ENCODE measurements at regions of chr12 and their contacts with region 1.

Region 1: GRCh38 chr12:1795785-1796514 is 24.4 kb upstream of the LRTM2 start:
- DNase-seq: peak; percentile 93
- H3K4me3 Mint-ChIP-seq: peak overlapping the region; percentile 87
- H3K27ac Mint-ChIP-seq: peak overlapping the region; percentile 89
- H3K4me1 Mint-ChIP-seq: peaks cover 18% of the 10 kb centered on the region
- H3K27me3 Mint-ChIP-seq: no peaks in the 10 kb centered on the region

Region 2: DNA sequence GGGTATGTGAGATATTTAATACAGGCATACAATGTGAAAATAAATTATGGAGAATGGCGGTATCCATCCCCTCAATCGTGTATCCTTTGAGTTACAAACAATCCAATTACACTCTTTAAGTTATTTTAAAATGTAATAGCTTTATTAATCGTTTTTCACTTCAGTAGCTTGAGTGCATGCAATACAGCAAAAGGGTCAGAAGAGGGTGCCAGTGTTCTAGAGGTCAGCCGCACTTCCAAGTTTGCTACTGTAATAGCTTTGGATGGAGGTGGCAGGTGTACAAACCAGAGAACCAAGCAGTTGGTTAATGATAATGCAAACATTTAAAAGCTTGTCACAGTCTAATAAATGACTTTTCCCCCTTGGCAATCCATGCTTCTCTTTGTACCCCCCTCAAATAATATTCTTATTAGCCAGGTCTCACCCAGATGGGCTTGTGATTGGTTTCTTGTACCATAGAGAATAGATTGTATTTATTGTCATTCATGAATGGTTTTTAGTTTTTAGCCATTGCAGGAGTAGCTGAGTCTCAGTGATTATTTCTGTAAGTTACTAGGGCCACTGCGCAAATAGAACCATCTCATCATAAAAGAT is 677.9 kb before region 1 on chr12:
- intact Hi-C with region 1: loop called (anchors 1 kb)
- DNase-seq: peak; percentile 52
- H3K4me3 Mint-ChIP-seq: no peak overlapping the region
- H3K27ac Mint-ChIP-seq: no peak overlapping the region
- H3K4me1 Mint-ChIP-seq: peaks cover 6% of the 10 kb centered on the region
- H3K27me3 Mint-ChIP-seq: no peaks in the 10 kb centered on the region

Region 3: DNA sequence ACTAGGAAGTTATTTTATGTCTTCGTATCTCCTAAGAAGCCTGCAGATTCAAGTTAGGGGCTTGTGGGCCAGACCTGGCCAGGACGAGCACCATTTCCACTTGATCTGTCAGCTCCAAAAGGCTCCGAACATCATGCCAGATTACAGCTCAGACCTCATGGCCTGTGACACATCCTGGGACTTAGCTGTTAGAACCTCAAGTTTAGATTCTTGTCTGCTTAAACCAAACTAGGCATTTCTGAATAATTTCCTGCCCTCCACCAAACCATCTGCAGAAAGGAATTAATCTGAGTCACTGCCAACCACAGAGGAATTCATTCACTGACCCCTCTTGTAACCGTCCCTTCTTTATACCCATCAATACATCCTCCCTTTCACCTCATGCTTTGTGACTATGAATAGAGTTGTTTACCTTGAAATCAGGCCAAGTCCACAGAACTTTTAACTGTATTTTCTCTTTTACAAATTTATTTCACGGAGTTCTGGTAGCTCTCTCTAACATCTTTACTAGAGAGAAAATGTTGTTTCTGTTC is 321.8 kb before region 1 on chr12:
- intact Hi-C with region 1: no loop called
- DNase-seq: peak; percentile 16
- H3K4me3 Mint-ChIP-seq: no peak overlapping the region
- H3K27ac Mint-ChIP-seq: no peak overlapping the region
- H3K4me1 Mint-ChIP-seq: peaks cover 6% of the 10 kb centered on the region
- H3K27me3 Mint-ChIP-seq: no peaks in the 10 kb centered on the region

Region 4: DNA sequence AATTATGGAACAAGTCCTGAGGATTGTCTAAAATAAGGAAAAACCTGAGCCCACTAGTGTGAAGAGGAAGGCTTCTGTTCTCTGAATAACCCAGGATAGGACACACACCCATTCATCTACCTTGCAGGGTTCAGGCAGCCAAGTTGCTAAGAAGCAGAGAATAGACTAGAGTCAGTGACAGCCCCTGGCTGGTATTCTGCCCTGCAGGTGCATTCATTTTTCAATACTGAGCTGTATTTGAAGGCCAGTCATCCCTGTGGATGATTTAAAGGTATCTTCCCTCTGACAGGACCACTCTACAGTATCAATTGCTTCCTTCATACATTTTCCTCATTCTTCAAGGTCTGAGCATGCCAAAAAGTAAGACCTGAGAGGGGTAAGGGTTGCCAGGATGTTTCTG is 144.0 kb before region 1 on chr12:
- intact Hi-C with region 1: loop called (anchors 1 kb)
- DNase-seq: no peak
- H3K4me3 Mint-ChIP-seq: no peak overlapping the region
- H3K27ac Mint-ChIP-seq: no peak overlapping the region
- H3K4me1 Mint-ChIP-seq: no peaks in the 10 kb centered on the region
- H3K27me3 Mint-ChIP-seq: peaks cover 29% of the 10 kb centered on the region

Region 5: GRCh38 chr12:1662761-1663439 is 133.1 kb before region 1 on chr12:
- intact Hi-C with region 1: no loop called
- DNase-seq: no peak
- H3K4me3 Mint-ChIP-seq: peak overlapping the region; percentile 85
- H3K27ac Mint-ChIP-seq: peak overlapping the region; percentile 78
- H3K4me1 Mint-ChIP-seq: peaks cover 31% of the 10 kb centered on the region
- H3K27me3 Mint-ChIP-seq: peaks cover 2% of the 10 kb centered on the region

Region 6: DNA sequence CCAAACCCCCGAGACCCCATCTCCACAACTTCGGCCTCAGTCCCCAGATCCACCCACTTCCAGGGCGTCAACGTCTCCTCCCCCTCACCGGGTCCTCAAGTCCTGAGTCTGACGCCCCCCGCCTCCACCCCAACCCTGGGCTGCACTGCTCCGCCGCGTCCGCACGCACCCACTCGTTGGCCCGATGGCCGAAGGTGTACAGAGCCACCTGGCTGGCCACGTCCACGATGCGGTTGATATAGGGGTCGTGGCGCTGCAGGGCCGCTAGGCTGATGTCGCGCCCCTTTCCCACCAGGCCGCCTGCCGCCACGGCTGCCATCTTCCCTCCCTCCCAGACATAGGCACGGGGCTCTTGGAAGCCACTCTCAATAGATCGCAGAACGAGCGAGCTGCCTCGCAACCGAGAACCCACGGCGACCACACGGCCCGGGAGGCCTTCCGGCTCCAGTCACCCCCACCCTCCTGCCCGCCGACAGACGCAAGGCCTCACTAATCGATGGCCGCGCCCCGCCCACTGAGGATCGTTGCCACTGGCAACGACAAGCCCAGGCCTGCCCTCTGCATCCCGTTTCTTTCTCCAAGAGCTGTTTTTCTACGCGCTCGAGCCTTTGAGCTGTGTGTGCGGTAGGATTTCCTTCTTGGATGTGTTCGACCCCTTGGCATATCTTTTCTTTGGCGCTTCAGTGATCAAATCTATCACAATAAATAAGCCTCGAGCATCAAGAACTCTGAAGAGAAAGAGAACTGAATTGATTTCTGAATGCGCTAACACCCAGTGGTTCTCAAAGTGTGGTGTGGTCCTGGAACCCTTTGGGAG is 208.4 kb after region 1 on chr12 and contains the start of gene DCP1B:
- intact Hi-C with region 1: loop called (anchors 2 kb)
- DNase-seq: peak; percentile 93
- H3K4me3 Mint-ChIP-seq: peak within 1 kb of the TSS; percentile 97
- H3K27ac Mint-ChIP-seq: peak within 1 kb of the TSS; percentile 95
- H3K4me1 Mint-ChIP-seq: peaks cover 31% of the 10 kb centered on the region
- H3K27me3 Mint-ChIP-seq: peaks cover 3% of the 10 kb centered on the region
- total RNA-seq, gene DCP1B: 8.8 and 9.8 TPM in 2 replicates

Region 7: GRCh38 chr12:2583091-2583497 is 787.1 kb after region 1 on chr12:
- intact Hi-C with region 1: loop called (anchors 2 kb)
- DNase-seq: peak; percentile 50
- H3K4me3 Mint-ChIP-seq: no peak overlapping the region
- H3K27ac Mint-ChIP-seq: no peak overlapping the region
- H3K4me1 Mint-ChIP-seq: no peaks in the 10 kb centered on the region
- H3K27me3 Mint-ChIP-seq: peaks cover 29% of the 10 kb centered on the region

Region 8: DNA sequence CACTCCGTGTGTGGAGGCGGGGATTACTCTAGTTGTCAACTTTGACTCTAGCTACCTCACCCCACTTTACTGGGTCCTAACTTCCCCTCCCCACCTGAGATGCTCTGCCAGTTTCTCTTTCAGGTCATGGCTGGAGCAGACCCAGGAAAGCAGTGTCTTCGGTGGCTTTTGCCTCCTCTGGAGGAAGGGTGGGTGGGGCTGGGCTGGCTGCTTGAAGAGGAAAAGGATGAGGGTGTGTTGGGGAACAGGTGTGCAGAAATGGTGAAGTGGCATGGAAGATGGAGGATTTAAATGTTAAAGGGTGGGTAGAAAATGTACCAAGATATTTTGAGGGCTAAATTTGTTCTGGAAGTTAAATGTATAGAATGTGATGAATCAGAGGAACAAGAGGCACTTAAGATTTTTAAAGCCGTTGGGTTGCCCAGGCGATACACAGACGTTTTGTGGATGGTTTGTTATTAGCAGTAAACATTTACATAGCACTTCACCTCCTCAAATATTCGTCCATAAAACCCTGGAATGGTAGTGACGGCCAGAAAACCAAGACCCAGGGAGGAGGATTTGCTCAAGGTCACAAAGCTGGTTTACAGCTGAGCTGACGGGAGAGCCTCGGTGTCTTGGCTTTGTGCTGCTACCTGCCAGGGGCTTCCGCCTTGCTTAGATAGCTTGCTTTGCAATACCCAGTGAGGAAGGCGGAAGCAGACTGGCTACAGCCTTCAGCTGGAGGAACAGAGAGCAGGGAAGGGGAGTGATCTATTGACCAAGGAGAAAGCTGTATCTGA is 1622.8 kb after region 1 on chr12:
- intact Hi-C with region 1: no loop called
- DNase-seq: no peak
- H3K4me3 Mint-ChIP-seq: no peak overlapping the region
- H3K27ac Mint-ChIP-seq: no peak overlapping the region
- H3K4me1 Mint-ChIP-seq: no peaks in the 10 kb centered on the region
- H3K27me3 Mint-ChIP-seq: peaks cover 6% of the 10 kb centered on the region

Measured in activated T-helper 1 cell treated with anti-CD3 and anti-CD28 coated beads, Interleukin-12 subunit alpha, Interleukin-12 subunit beta, Interleukin-2, Interleukin-4 antibody, amounts not matched to agents 30 ng/mL and 10 ng/mL and 1 ng/mL, durations not matched to agents 14 hours and 24 hours and 36 hours (primary cell).